ENCODE measurements at regions of chr14 and their contacts with region 1.

Region 1: GRCh38 chr14:54189748-54190354 is 207.0 kb upstream of the CDKN3 start:
- DNase-seq: no peak
- ATAC-seq: no peak
- H3K4me3 ChIP-seq: no peak overlapping the region
- H3K27ac ChIP-seq: no peak overlapping the region
- H3K4me1 ChIP-seq: peaks cover 20% of the 10 kb centered on the region
- H3K27me3 ChIP-seq: no peaks in the 10 kb centered on the region
- CTCF ChIP-seq: no peak
- EP300 ChIP-seq: no peak
- POLR2A ChIP-seq: no peak
- RAD21 ChIP-seq: no peak

Region 2: GRCh38 chr14:54148251-54148650 is 41.6 kb before region 1 on chr14:
- CTCF ChIA-PET with region 1: no interaction called
- POLR2A ChIA-PET with region 1: no interaction called
- in situ Hi-C with region 1: no loop called
- intact Hi-C with region 1: no loop called
- DNase-seq: no peak
- ATAC-seq: no peak
- H3K4me3 ChIP-seq: no peak overlapping the region
- H3K27ac ChIP-seq: no peak overlapping the region
- H3K4me1 ChIP-seq: peaks cover 11% of the 10 kb centered on the region
- H3K27me3 ChIP-seq: no peaks in the 10 kb centered on the region
- CTCF ChIP-seq: no peak
- EP300 ChIP-seq: no peak
- POLR2A ChIP-seq: no peak
- RAD21 ChIP-seq: no peak

Region 3: DNA sequence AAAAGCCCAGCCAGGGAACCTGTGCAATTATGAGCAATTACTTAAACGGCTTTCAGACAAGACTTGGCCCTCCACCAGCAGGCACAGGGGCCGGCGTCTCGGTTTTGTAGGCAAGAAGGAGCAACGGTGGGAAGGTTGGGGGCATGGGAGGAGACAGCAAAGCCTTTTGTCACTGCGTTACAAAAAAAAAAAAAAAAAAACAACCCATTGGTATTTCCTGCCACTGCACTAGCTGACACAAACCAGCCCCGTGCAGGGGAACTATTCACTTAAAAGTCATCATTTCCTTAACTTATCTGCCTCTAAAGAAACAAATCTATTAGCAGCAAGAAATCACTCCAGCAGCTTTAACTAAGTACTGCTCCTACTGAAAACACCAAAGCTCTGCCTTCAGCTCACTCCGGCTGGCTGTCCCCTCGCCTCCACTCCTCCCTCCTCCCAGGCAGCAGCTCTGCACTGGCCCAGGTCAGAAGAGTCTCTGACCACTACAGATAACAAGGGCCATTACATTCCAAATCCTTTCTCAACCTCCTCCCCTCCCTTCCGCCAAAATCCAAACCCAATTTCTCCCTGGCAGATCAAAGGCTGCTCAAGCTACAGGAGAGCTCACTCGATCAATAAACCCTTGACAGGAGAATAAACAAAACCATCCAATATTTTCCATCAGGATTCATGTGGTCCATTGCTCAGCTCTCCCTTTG is 101.8 kb after region 1 on chr14:
- CTCF ChIA-PET with region 1: no interaction called
- POLR2A ChIA-PET with region 1: no interaction called
- in situ Hi-C with region 1: no loop called
- intact Hi-C with region 1: loop called (anchors 1 kb)
- DNase-seq: peak; percentile 98
- ATAC-seq: peak; percentile 100
- H3K4me3 ChIP-seq: peak overlapping the region in 2 of 3 experiments; percentile 27 to 38; a peak in 2 of 6 replicates
- H3K27ac ChIP-seq: peak overlapping the region; percentile 55
- H3K4me1 ChIP-seq: peaks cover 36% of the 10 kb centered on the region
- H3K27me3 ChIP-seq: no peaks in the 10 kb centered on the region; a peak in 1 of 5 replicates
- CTCF ChIP-seq: no peak
- EP300 ChIP-seq: peak; percentile 56 to 95; a peak in 3 of 4 replicates
- POLR2A ChIP-seq: no peak; a peak in 1 of 4 replicates
- RAD21 ChIP-seq: peak; percentile 26; the same call in 1 of the 2 replicates

Region 4: DNA sequence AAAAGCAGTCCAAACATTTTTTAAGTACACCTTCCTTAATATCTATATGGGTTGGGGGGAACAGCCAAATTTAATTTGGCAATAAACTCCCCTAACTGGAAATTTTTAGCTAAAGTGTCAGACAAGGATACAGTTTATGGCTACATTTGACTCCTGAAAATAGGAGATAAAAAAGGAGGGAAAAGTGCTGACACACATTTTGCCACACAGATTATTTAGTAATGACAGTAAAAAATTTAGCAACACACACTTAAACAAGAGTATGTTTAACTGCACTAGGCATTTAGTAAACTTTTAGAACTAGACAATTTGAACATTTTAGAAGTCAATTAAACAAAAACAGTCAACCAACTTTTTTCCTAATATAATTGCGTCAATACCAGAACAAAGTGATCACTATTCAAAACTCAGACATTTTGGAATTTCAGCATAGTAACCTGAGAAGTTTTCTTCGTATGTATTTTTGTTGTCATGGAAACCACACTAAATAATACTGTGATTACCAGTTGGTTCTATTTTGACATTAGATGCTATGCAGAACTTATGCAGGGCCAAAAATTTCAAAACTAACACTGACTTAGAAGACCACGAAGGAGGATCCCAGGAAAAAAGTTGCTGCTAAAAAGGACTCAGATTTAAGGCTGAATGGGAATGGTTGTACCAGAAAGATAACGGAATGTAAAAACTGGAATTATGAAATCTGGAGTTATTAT is 285.5 kb after region 1 on chr14:
- CTCF ChIA-PET with region 1: no interaction called
- POLR2A ChIA-PET with region 1: no interaction called
- in situ Hi-C with region 1: no loop called
- intact Hi-C with region 1: no loop called
- DNase-seq: no peak
- ATAC-seq: no peak
- H3K4me3 ChIP-seq: no peak overlapping the region
- H3K27ac ChIP-seq: no peak overlapping the region
- H3K4me1 ChIP-seq: 0 out of 2 replicates have a peak, but pooled peaks cover 14% of the 10 kb centered on the region
- H3K27me3 ChIP-seq: no peaks in the 10 kb centered on the region
- CTCF ChIP-seq: no peak
- EP300 ChIP-seq: no peak
- POLR2A ChIP-seq: no peak
- RAD21 ChIP-seq: no peak